HEK293 (cell line): ENCODE measurements at regions of chrX and their contacts with region 1.

Region 1: GRCh38 chrX:70970482-70970995 is 39.6 kb upstream of the SLC7A3 start:
- H3K4me3 ChIP-seq: no peak overlapping the region
- H3K27ac ChIP-seq: no peak overlapping the region
- H3K4me1 ChIP-seq: no peaks in the 10 kb centered on the region
- CTCF ChIP-seq: peak; percentile 43; the same call in 1 of the 2 replicates

Region 2: GRCh38 chrX:70988425-70988824 is 17.9 kb after region 1 on chrX:
- CTCF ChIA-PET with region 1: no interaction called
- POLR2A ChIA-PET with region 1: no interaction called
- H3K4me3 ChIP-seq: no peak overlapping the region
- H3K27ac ChIP-seq: no peak overlapping the region
- H3K4me1 ChIP-seq: no peaks in the 10 kb centered on the region
- CTCF ChIP-seq: no peak

Region 3: GRCh38 chrX:71118032-71118984 is 147.8 kb after region 1 on chrX and contains the start of gene MED12:
- CTCF ChIA-PET with region 1: no interaction called
- POLR2A ChIA-PET with region 1: no interaction called
- H3K4me3 ChIP-seq: peak within 1 kb of the TSS; percentile 64
- H3K27ac ChIP-seq: peak within 1 kb of the TSS; percentile 72
- H3K4me1 ChIP-seq: no peaks in the 10 kb centered on the region
- CTCF ChIP-seq: no peak

Region 4: DNA sequence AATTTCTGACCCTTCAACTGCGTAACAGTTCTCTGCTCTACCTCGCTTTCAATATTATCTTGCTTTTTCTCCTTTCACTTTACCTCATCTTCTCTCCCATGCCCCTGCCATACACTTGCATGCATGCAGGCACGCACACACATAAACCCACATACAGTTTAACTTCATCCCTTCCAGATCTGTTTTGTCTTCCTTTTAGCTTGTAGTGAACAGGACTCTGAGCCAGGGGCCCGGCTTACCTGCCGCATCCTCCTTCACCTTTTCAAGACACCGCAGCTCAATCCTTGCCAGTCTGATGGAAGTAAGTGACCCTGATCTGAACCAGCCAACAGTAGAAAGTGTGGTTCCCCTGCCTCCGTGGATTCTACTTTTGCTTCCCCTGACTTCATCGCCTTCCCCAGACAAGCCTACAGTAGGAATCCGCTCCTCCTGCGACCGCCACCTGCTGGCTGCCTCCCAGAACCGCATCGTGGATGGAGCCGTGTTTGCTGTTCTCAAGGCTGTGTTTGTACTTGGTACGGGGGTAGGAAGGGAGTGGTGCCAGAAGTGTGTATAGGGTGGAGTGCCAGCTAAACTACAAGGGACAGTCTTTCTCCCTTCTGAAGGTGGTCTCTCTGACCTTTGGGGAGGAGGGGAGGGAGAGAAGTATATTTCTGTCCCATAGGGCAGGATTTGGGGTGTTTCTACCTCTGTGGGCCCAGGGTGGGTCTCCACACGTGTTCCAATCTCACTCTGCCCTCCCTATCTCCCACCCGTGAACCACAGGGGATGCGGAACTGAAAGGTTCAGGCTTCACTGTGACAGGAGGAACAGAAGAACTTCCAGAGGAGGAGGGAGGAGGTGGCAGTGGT is 158.6 kb after region 1 on chrX:
- CTCF ChIA-PET with region 1: interaction called, 10 read pairs
- POLR2A ChIA-PET with region 1: no interaction called
- H3K4me3 ChIP-seq: no peak overlapping the region
- H3K27ac ChIP-seq: no peak overlapping the region
- H3K4me1 ChIP-seq: no peaks in the 10 kb centered on the region
- CTCF ChIP-seq: peak; percentile 83